ENCODE measurements at regions of chr9 and their contacts with region 1.

Region 1: DNA sequence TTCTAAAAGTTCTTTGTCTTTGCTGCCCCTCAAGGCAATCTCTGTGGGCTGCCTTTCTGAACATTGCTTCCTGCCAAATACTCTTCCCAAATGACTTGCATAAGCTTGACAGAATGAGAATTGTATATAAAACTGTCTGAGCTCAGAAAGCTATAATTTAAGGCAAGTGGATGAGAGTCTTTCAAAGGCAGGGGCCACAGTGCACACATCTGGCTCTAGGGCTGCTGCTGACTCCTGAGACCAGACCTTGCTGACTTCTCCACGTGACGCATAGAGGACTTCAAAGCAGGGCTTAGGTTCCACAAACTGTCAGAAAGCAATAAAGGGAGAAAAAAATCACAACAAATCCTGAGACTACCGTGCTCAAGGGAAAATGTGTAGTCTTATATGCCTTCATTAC is 79.4 kb upstream of the DIRAS2 start:
- DNase-seq: no peak
- ATAC-seq: no peak
- H3K4me3 ChIP-seq: no peak overlapping the region
- H3K27ac ChIP-seq: no peak overlapping the region
- H3K4me1 ChIP-seq: no peaks in the 10 kb centered on the region
- H3K27me3 ChIP-seq: peaks cover 0 to 7% (median 0%) of the 10 kb centered on the region in 7 donors
- CTCF ChIP-seq: no peak

Region 2: DNA sequence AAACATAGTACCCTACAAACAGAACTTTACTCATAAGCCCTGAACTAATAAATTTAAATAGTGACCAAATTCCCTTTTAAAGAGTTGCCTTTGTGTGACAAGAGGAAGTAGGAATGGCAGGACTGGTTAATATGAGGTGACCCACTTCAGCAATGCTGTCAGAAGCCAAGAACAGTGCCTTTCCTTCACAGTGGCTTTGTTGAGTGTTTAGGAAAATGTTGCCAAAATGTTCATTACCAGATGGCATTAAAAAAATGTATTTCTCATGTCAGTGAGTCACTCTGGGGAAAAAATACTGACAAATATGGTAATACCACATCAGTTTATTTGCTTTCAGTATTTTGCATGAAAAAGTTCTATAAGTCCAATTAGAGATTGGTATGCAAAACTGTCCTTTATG is 182.8 kb before region 1 on chr9:
- intact Hi-C with region 1: no loop called
- DNase-seq: no peak
- ATAC-seq: no peak
- H3K4me3 ChIP-seq: no peak overlapping the region
- H3K27ac ChIP-seq: no peak overlapping the region
- H3K4me1 ChIP-seq: no peaks in the 10 kb centered on the region
- H3K27me3 ChIP-seq: peaks cover 0 to 31% (median 9%) of the 10 kb centered on the region in 7 donors
- CTCF ChIP-seq: no peak

Region 3: DNA sequence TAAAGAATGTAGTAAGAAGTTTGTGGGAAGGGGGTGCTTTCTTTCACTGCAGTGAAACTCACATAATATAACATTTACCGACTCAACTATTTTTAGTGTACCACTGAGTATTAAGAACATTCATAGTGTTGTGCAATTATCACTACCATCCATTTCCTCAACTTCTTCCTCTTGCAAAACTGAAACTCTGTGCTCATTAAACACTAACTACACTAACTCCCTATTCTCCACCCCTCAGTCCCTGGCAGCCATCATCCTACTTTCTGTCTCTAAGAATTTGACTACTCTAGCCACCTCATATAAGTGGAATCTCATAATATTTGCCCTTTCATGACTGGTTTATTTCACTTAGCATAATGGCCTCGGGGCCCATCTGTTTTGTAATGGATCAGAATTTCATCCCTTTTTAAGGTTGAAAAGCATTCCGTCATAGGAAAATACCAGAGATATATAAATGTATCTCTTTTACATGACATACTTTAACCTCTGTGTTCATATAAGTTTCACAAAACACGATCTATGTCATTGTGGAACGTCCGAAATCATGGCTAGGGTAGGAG is 23.1 kb before region 1 on chr9:
- intact Hi-C with region 1: loop called in 1 of 10 experiments (anchors 1 kb)
- DNase-seq: no peak
- ATAC-seq: no peak
- H3K4me3 ChIP-seq: no peak overlapping the region
- H3K27ac ChIP-seq: no peak overlapping the region
- H3K4me1 ChIP-seq: peaks cover 0 to 11% (median 0%) of the 10 kb centered on the region in 9 donors
- H3K27me3 ChIP-seq: peaks cover 0 to 36% (median 12%) of the 10 kb centered on the region in 7 donors
- CTCF ChIP-seq: no peak